OCI-LY7 (cell line): ENCODE measurements at regions of chr18 and their contacts with region 1.

Region 1: DNA sequence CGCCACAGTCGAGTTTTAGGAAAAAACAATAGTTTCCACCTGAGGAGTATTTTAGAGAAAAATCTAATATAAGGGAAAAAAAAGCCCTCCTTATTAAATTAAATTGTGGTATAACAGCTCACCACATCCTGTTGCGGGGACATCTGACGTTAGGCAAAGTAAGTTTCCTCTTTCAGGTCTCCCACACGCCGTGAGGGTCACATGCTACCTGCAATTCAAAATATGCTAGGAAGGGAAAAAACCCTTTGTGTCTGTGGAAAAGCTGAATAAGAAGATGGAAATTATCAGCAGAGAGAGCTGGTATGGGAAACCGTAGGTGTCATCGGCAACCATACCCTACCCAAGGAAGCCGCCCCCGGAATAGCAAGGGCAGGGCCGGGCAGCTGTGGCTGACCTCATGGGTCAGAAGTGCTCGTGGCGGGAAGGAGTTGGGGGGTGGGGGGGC is 128.0 kb downstream of the NFATC1 start:
- DNase-seq: peak; percentile 78
- H3K4me3 ChIP-seq: peak overlapping the region; percentile 67
- H3K27ac ChIP-seq: peak overlapping the region; percentile 100
- H3K4me1 ChIP-seq: peaks cover 91% of the 10 kb centered on the region
- CTCF ChIP-seq: no peak

Region 2: DNA sequence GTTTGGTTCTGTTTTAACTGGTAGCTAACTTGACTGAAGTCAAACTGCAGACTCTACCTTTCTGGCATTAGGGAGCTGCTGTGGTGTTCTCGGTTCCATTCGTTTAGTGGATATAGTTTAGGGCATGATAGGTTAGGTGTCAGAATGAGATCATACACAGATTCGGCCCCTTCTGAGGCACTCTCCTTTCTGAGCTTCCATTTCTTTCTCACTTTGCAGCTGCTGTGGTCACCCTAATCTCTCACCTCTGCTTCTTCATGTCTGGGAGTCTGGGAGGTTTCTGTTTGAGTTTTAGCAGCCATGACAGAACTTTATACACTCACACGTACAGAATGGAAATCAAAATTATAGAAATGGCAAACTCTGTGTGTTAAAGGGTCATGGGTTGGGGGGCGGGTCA is 331.8 kb before region 1 on chr18:
- CTCF ChIA-PET with region 1: no interaction called
- POLR2A ChIA-PET with region 1: no interaction called
- intact Hi-C with region 1: loop called (anchors 5 kb)
- DNase-seq: no peak
- H3K4me3 ChIP-seq: no peak overlapping the region
- H3K27ac ChIP-seq: peak overlapping the region; percentile 93
- H3K4me1 ChIP-seq: peaks cover 76% of the 10 kb centered on the region
- CTCF ChIP-seq: no peak

Region 3: GRCh38 chr18:79405781-79406575 is 117.8 kb before region 1 on chr18:
- CTCF ChIA-PET with region 1: interaction called, 4 read pairs
- POLR2A ChIA-PET with region 1: interaction called, 5 read pairs
- intact Hi-C with region 1: loop called (anchors 2 kb)
- DNase-seq: peak; percentile 73
- H3K4me3 ChIP-seq: peak overlapping the region; percentile 73
- H3K27ac ChIP-seq: peak overlapping the region; percentile 76
- H3K4me1 ChIP-seq: peaks cover 55% of the 10 kb centered on the region
- CTCF ChIP-seq: no peak

Region 4: GRCh38 chr18:79465392-79465991 is 58.3 kb before region 1 on chr18:
- CTCF ChIA-PET with region 1: no interaction called
- POLR2A ChIA-PET with region 1: interaction called, 4 read pairs
- intact Hi-C with region 1: loop called (anchors 1 kb)
- DNase-seq: peak; percentile 79
- H3K4me3 ChIP-seq: peak overlapping the region; percentile 66
- H3K27ac ChIP-seq: peak overlapping the region; percentile 96
- H3K4me1 ChIP-seq: peaks cover 64% of the 10 kb centered on the region
- CTCF ChIP-seq: no peak

Region 5: GRCh38 chr18:79644006-79644665 is 120.4 kb after region 1 on chr18:
- CTCF ChIA-PET with region 1: interaction called, 15 read pairs
- POLR2A ChIA-PET with region 1: no interaction called
- intact Hi-C with region 1: loop called (anchors 2 kb)
- DNase-seq: peak; percentile 70
- H3K4me3 ChIP-seq: peak overlapping the region; percentile 50
- H3K27ac ChIP-seq: no peak overlapping the region
- H3K4me1 ChIP-seq: peaks cover 19% of the 10 kb centered on the region
- CTCF ChIP-seq: peak; percentile 83

Region 6: GRCh38 chr18:80034068-80034851 is 510.5 kb after region 1 on chr18 and contains the start of gene RBFA:
- CTCF ChIA-PET with region 1: no interaction called
- POLR2A ChIA-PET with region 1: no interaction called
- intact Hi-C with region 1: loop called (anchors 2 kb)
- DNase-seq: peak; percentile 89
- H3K4me3 ChIP-seq: peak within 1 kb of the TSS; percentile 73
- H3K27ac ChIP-seq: peak within 1 kb of the TSS; percentile 54
- H3K4me1 ChIP-seq: peaks cover 19% of the 10 kb centered on the region
- CTCF ChIP-seq: peak; percentile 43; the same call in 1 of the 2 replicates
- total RNA-seq, gene RBFA: 20.4 and 25.9 TPM in 2 replicates